GM23248 (cell line): ENCODE measurements at regions of chr3 and their contacts with region 1.

Region 1: GRCh38 chr3:30199855-30200254 is 406.5 kb upstream of the TGFBR2 start:
- DNase-seq: no peak
- H3K4me3 ChIP-seq: no peak overlapping the region
- H3K27ac ChIP-seq: no peak overlapping the region
- H3K4me1 ChIP-seq: peaks cover 39% of the 10 kb centered on the region
- H3K27me3 ChIP-seq: no peaks in the 10 kb centered on the region

Region 2: DNA sequence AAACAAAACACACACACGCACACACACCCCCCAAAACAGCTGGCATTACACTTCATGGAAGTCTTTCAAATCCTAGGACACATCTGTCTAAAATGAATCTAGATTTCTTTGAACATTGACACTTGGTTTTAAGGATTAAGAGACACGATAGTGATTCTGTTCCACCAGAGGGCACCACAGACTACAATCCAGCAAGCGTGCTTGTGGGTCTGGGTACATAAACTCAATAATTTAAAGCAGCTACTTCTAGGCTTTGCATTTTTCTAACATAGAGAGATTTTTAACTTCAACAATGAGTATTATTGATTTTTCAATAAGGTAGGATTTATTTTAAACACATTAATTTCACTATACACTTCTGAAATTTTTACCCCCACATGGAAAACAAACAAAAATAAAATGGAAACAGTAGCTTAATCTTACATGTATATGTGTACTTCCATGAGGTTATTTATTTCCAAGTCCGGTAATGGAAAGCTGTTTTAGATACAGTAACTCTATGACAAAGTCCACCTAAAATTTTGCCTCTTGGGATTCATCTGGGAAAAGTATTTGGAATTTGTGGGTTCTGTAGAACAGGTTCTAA is 157.5 kb before region 1 on chr3:
- in situ Hi-C with region 1: loop called (anchors 5 kb)
- DNase-seq: peak; percentile 76
- H3K4me3 ChIP-seq: no peak overlapping the region
- H3K27ac ChIP-seq: no peak overlapping the region
- H3K4me1 ChIP-seq: peaks cover 10% of the 10 kb centered on the region; the same call in 1 of the 2 replicates
- H3K27me3 ChIP-seq: no peaks in the 10 kb centered on the region

Region 3: GRCh38 chr3:30611613-30612436 is 412.0 kb after region 1 on chr3:
- in situ Hi-C with region 1: loop called (anchors 10 kb)
- DNase-seq: peak; percentile 70
- H3K4me3 ChIP-seq: peak overlapping the region; percentile 8; the same call in 1 of the 2 replicates
- H3K27ac ChIP-seq: 0 out of 2 replicates have a peak overlapping the region, but pooled peaks have one; percentile 4
- H3K4me1 ChIP-seq: peaks cover 71% of the 10 kb centered on the region
- H3K27me3 ChIP-seq: no peaks in the 10 kb centered on the region

Region 4: DNA sequence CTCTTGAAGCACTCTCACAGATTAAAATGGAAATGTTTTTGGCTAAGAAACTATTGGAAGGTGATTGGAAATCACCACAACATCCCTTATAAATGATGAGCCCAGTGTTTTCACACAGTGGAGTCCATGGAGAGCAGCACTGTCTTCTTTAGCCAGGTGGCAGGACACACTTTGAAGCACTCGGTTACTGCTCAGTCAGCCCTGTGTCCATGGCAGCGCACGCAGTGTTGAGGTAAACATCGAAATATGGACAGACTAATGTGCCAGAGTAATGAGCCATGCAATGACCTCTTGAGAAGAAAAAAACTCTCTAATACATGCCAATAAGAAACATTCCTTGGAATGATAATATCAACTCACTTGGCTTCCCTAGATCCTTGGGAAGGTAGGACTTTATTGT is 473.1 kb after region 1 on chr3:
- in situ Hi-C with region 1: loop called (anchors 10 kb)
- DNase-seq: no peak
- H3K4me3 ChIP-seq: no peak overlapping the region
- H3K27ac ChIP-seq: no peak overlapping the region
- H3K4me1 ChIP-seq: no peaks in the 10 kb centered on the region
- H3K27me3 ChIP-seq: no peaks in the 10 kb centered on the region